ENCODE measurements at regions of chr10 and their contacts with region 1.

Region 1: DNA sequence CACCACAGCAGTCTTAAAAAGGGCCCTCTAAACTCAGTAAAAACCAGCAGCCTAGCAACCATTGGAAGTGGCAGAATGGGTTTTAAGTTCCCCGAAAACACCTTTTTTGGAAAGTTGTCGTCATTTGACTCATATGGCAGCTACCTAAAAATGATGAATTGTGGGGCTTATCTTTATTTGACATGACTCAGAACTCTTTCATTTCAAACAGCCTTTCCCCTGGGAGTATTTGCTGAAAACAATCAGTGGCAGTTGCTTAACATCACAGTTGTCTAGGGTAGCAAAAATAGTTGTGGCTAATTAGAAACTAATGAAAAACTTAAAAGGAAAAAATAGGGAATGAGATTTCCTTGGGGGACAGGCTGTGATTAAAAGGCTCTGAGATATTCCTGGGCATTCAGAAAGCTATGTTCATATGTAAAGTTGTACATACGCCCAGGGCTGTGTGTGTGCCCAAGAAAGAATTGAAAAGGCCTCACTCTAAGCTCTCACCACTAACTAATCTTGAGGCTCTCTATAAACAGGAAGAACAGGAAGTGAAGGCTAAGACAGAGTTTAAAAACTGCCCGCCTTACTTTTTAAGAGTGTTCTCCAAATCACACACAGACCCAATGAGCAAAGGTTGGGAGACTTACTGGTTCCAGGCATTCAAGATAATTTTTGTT is 81.7 kb upstream of the HECTD2 start:
- DNase-seq: no peak
- ATAC-seq: no peak
- H3K4me3 ChIP-seq: no peak overlapping the region
- H3K4me3 Mint-ChIP-seq: no peak overlapping the region
- H3K27ac ChIP-seq: no peak overlapping the region
- H3K27ac Mint-ChIP-seq: no peak overlapping the region
- H3K4me1 ChIP-seq: no peaks in the 10 kb centered on the region
- H3K4me1 Mint-ChIP-seq: no peaks in the 10 kb centered on the region
- H3K27me3 ChIP-seq: no peaks in the 10 kb centered on the region
- H3K27me3 Mint-ChIP-seq: no peaks in the 10 kb centered on the region
- CTCF ChIP-seq: no peak

Region 2: GRCh38 chr10:91340613-91341362 is 12.3 kb after region 1 on chr10:
- CTCF ChIA-PET with region 1: interaction called, 3 read pairs
- POLR2A ChIA-PET with region 1: no interaction called
- intact Hi-C with region 1: loop called (anchors 1 kb)
- DNase-seq: no peak
- ATAC-seq: no peak
- H3K4me3 ChIP-seq: no peak overlapping the region
- H3K4me3 Mint-ChIP-seq: no peak overlapping the region
- H3K27ac ChIP-seq: no peak overlapping the region
- H3K27ac Mint-ChIP-seq: no peak overlapping the region
- H3K4me1 ChIP-seq: no peaks in the 10 kb centered on the region
- H3K4me1 Mint-ChIP-seq: no peaks in the 10 kb centered on the region
- H3K27me3 ChIP-seq: no peaks in the 10 kb centered on the region
- H3K27me3 Mint-ChIP-seq: no peaks in the 10 kb centered on the region
- CTCF ChIP-seq: no peak

Measured in B cell (primary cell).